PC-9 (cell line): ENCODE measurements at regions of chr7 and their contacts with region 1.

Region 1: GRCh38 chr7:141975806-141976523 is 2.4 kb upstream of the TAS2R38 start:
- DNase-seq: peak; percentile 44 to 86
- H3K4me3 ChIP-seq: no peak overlapping the region
- H3K27ac ChIP-seq: no peak overlapping the region
- H3K4me1 ChIP-seq: no peaks in the 10 kb centered on the region; the same call in 1 of the 2 replicates
- H3K27me3 ChIP-seq: no peaks in the 10 kb centered on the region
- CTCF ChIP-seq: peak; percentile 96

Region 2: DNA sequence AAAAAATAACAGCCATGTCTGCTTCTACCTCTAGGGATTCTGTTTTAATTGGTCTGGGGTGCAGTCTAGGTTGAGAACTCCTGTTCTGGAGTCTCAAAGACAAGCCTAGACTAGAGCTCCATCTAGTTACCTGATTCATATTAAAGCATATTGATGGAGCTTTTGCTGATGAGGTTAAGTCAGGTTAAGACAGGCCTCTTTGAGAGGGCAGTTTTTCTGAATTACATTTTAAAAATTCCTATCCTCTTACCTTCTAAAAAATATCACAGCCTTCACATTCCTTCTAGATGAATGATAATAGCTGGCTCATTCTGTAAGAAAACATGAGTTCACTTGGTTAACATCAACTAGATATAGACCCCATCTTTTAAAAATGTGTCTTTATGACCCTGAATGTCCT is 48.6 kb after region 1 on chr7:
- CTCF ChIA-PET with region 1: interaction called, 12 read pairs
- POLR2A ChIA-PET with region 1: no interaction called
- intact Hi-C with region 1: loop called (anchors 1 kb)
- DNase-seq: peak in 1 of 2 experiments; percentile 66
- H3K4me3 ChIP-seq: no peak overlapping the region
- H3K27ac ChIP-seq: no peak overlapping the region
- H3K4me1 ChIP-seq: peaks cover 22% of the 10 kb centered on the region
- H3K27me3 ChIP-seq: no peaks in the 10 kb centered on the region
- CTCF ChIP-seq: no peak

Region 3: GRCh38 chr7:142104550-142105527 is 128.9 kb after region 1 on chr7:
- CTCF ChIA-PET with region 1: no interaction called
- POLR2A ChIA-PET with region 1: no interaction called
- intact Hi-C with region 1: loop called (anchors 2 kb)
- DNase-seq: peak; percentile 71 to 99
- H3K4me3 ChIP-seq: no peak overlapping the region
- H3K27ac ChIP-seq: peak overlapping the region; percentile 87
- H3K4me1 ChIP-seq: peaks cover 32% of the 10 kb centered on the region
- H3K27me3 ChIP-seq: no peaks in the 10 kb centered on the region
- CTCF ChIP-seq: no peak

Region 4: GRCh38 chr7:142188846-142189245 is 212.9 kb after region 1 on chr7:
- CTCF ChIA-PET with region 1: interaction called, 4 read pairs
- POLR2A ChIA-PET with region 1: no interaction called
- intact Hi-C with region 1: loop called (anchors 1 kb)
- DNase-seq: peak in 1 of 2 experiments; percentile 55
- H3K4me3 ChIP-seq: no peak overlapping the region
- H3K27ac ChIP-seq: no peak overlapping the region
- H3K4me1 ChIP-seq: 0 out of 2 replicates have a peak, but pooled peaks cover 8% of the 10 kb centered on the region
- H3K27me3 ChIP-seq: no peaks in the 10 kb centered on the region
- CTCF ChIP-seq: peak; percentile 74

Region 5: DNA sequence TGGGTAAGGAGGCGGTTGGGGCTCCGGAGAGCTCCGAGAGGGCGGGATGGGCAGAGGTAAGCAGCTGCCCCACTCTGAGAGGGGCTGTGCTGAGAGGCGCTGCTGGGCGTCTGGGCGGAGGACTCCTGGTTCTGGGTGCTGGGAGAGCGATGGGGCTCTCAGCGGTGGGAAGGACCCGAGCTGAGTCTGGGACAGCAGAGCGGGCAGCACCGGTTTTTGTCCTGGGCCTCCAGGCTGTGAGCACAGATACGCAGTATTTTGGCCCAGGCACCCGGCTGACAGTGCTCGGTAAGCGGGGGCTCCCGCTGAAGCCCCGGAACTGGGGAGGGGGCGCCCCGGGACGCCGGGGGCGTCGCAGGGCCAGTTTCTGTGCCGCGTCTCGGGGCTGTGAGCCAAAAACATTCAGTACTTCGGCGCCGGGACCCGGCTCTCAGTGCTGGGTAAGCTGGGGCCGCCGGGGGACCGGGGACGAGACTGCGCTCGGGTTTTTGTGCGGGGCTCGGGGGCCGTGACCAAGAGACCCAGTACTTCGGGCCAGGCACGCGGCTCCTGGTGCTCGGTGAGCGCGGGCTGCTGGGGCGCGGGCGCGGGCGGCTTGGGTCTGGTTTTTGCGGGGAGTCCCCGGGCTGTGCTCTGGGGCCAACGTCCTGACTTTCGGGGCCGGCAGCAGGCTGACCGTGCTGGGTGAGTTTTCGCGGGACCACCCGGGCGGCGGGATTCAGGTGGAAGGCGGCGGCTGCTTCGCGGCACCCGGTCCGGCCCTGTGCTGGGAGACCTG is 820.8 kb after region 1 on chr7:
- CTCF ChIA-PET with region 1: no interaction called
- POLR2A ChIA-PET with region 1: no interaction called
- intact Hi-C with region 1: loop called (anchors 5 kb)
- DNase-seq: peak; percentile 35 to 36
- H3K4me3 ChIP-seq: peak overlapping the region; percentile 93
- H3K27ac ChIP-seq: peak overlapping the region; percentile 92
- H3K4me1 ChIP-seq: peaks cover 55% of the 10 kb centered on the region
- H3K27me3 ChIP-seq: no peaks in the 10 kb centered on the region
- CTCF ChIP-seq: no peak